Left ventricle myocardium inferior (tissue), 1 donor: ENCODE measurements at regions of chr15 and their contacts with region 1.

Region 1: DNA sequence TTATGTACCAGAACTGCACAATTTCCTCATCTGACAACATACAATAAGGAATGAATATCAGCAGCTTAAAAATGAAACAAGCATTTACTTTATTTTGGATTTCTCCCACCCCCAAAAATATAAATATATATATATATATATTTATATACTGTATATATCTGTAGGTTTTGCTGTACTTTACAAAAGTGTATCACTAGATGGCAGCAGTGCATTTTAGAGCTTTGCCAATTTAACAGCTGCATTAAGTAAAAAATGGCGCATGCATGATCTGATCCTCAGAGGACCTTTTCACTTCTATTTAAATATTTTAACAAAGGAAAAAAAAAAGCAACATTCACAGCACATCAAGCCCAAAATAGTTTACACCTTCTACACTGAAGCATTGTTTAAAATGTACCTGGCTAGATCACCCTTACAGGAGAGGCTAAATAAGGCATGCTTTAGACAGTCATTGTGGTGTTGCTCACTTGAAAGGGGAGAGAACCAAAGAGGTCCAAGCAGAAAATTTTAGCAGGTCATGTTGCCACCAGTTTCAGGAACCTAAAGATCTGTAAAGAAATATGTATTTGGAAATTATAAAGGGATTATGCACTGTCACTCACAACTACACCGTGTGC is 72.6 kb downstream of the NPTN start:
- DNase-seq: no peak
- H3K4me3 ChIP-seq: no peak overlapping the region
- H3K27ac ChIP-seq: no peak overlapping the region
- H3K4me1 ChIP-seq: peaks cover 13% of the 10 kb centered on the region
- H3K27me3 ChIP-seq: no peaks in the 10 kb centered on the region
- CTCF ChIP-seq: peak; percentile 66

Region 2: GRCh38 chr15:73637527-73637926 is 76.9 kb after region 1 on chr15:
- intact Hi-C with region 1: loop called (anchors 5 kb)
- DNase-seq: no peak
- H3K4me3 ChIP-seq: no peak overlapping the region
- H3K27ac ChIP-seq: no peak overlapping the region
- H3K4me1 ChIP-seq: peaks cover 16% of the 10 kb centered on the region
- H3K27me3 ChIP-seq: peaks cover 15% of the 10 kb centered on the region
- CTCF ChIP-seq: no peak